Left ventricle myocardium inferior (tissue), 1 donor: ENCODE measurements at regions of chr6 and their contacts with region 1.

Region 1: GRCh38 chr6:56902641-56903464 is 52.1 kb upstream of the BEND6 start:
- DNase-seq: no peak
- H3K4me3 ChIP-seq: peak overlapping the region; percentile 17
- H3K27ac ChIP-seq: no peak overlapping the region
- H3K4me1 ChIP-seq: no peaks in the 10 kb centered on the region
- H3K27me3 ChIP-seq: no peaks in the 10 kb centered on the region
- CTCF ChIP-seq: peak; percentile 79

Region 2: GRCh38 chr6:57021086-57021720 is 118.3 kb after region 1 on chr6:
- intact Hi-C with region 1: loop called (anchors 5 kb)
- DNase-seq: no peak
- H3K4me3 ChIP-seq: no peak overlapping the region
- H3K27ac ChIP-seq: no peak overlapping the region
- H3K4me1 ChIP-seq: no peaks in the 10 kb centered on the region
- H3K27me3 ChIP-seq: no peaks in the 10 kb centered on the region
- CTCF ChIP-seq: peak; percentile 68

Region 3: DNA sequence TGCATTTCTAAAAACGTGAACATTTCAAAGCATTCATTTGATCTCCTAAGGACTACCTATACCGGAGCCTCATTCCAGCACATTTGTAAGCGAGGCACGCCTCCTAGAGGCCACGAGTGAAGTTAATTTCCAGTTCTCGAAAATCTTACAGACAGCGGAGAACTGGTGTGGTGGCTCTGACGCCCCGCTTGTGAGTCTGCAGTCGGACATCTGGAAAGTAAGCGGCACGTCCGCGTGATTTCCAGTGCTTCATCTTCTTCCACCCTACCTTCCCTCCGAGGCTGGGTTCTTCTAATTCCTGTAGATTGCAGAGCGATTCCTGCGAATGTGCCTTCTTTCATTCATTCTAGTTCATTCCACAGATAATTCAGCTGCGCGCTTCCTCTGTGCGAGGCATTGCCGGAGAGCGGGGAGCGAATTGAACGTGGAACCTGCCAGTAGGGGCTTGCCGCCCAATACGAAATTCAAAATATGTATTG is 413.8 kb after region 1 on chr6:
- intact Hi-C with region 1: loop called (anchors 2 kb)
- DNase-seq: peak; percentile 76
- H3K4me3 ChIP-seq: peak overlapping the region; percentile 80
- H3K27ac ChIP-seq: peak overlapping the region; percentile 72
- H3K4me1 ChIP-seq: peaks cover 31% of the 10 kb centered on the region
- H3K27me3 ChIP-seq: no peaks in the 10 kb centered on the region
- CTCF ChIP-seq: peak; percentile 81